Natural killer cell (primary cell): ENCODE measurements at regions of chr16 and their contacts with region 1.

Region 1: DNA sequence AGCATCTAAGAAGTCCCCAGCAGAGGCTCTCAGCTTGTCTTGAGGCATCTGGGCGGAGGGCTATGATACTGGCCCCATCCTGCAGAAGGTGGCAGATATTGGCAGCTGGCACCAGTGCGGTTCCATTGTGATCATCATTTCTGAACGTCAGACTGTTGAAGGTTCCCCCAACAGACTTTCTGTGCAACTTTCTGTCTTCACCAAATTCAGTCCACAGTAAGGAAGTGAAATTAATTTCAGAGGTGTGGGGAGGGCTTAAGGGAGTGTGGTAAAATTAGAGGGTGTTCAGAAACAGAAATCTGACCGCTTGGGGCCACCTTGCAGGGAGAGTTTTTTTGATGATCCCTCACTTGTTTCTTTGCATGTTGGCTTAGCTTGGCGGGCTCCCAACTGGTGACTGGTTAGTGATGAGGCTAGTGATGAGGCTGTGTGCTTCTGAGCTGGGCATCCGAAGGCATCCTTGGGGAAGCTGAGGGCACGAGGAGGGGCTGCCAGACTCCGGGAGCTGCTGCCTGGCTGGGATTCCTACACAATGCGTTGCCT is at the start of gene CIITA:
- DNase-seq: peak; percentile 56 to 84
- ATAC-seq: peak; percentile 80 to 89 (median 84)
- H3K4me3 ChIP-seq: peak within 1 kb of the TSS; percentile 84
- H3K4me3 Mint-ChIP-seq: peak within 1 kb of the TSS; percentile 97
- H3K27ac ChIP-seq: peak within 1 kb of the TSS; percentile 79
- H3K27ac Mint-ChIP-seq: peak within 1 kb of the TSS; percentile 83 to 89
- H3K4me1 ChIP-seq: peaks cover 71% of the 10 kb centered on the region
- H3K4me1 Mint-ChIP-seq: peaks cover 58 to 67% of the 10 kb centered on the region in 2 donors
- H3K27me3 ChIP-seq: no peaks in the 10 kb centered on the region
- H3K27me3 Mint-ChIP-seq: peaks cover 0 to 13% of the 10 kb centered on the region in 2 donors
- CTCF ChIP-seq: no peak
- total RNA-seq, gene CIITA: 11.5 to 17.7 (median 14.4) TPM

Region 2: DNA sequence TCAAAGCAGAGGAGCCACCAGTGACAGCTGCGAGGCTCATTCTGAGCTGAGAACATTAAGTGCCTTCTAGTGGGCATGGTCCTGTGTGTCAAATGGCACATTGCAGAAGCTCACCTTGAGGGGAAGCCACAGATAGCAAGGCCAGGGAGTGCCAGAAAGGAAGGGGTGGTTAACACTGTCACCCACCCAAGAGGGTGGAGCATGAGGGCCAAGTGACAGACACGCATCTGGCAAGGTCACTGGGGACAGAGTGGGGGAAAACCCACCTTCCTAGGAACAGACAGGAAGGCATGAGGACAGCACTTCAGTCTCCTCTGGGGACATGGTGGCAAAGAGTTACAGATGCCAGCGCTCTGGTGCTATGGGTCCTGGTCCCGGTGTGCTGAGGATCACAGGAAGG is 111.1 kb before region 1 on chr16:
- intact Hi-C with region 1: loop called (anchors 5 kb)
- DNase-seq: peak; percentile 42 to 74
- ATAC-seq: peak; percentile 85 to 90 (median 89)
- H3K4me3 ChIP-seq: no peak overlapping the region
- H3K4me3 Mint-ChIP-seq: peak overlapping the region; percentile 75
- H3K27ac ChIP-seq: peak overlapping the region; percentile 72
- H3K27ac Mint-ChIP-seq: peak overlapping the region; percentile 97
- H3K4me1 ChIP-seq: peaks cover 74% of the 10 kb centered on the region
- H3K4me1 Mint-ChIP-seq: peaks cover 48 to 64% of the 10 kb centered on the region in 2 donors
- H3K27me3 ChIP-seq: no peaks in the 10 kb centered on the region
- H3K27me3 Mint-ChIP-seq: no peaks in the 10 kb centered on the region
- CTCF ChIP-seq: no peak

Region 3: GRCh38 chr16:10944249-10945064 is 67.6 kb after region 1 on chr16 and contains the start of gene CLEC16A:
- intact Hi-C with region 1: no loop called
- DNase-seq: peak; percentile 96
- ATAC-seq: peak; percentile 77 to 91 (median 81)
- H3K4me3 ChIP-seq: peak within 1 kb of the TSS; percentile 90
- H3K4me3 Mint-ChIP-seq: peak within 1 kb of the TSS; percentile 88
- H3K27ac ChIP-seq: peak within 1 kb of the TSS; percentile 50
- H3K27ac Mint-ChIP-seq: peak within 1 kb of the TSS; percentile 65 to 93
- H3K4me1 ChIP-seq: peaks cover 54% of the 10 kb centered on the region
- H3K4me1 Mint-ChIP-seq: peaks cover 56 to 67% of the 10 kb centered on the region in 2 donors
- H3K27me3 ChIP-seq: no peaks in the 10 kb centered on the region
- H3K27me3 Mint-ChIP-seq: no peaks in the 10 kb centered on the region
- CTCF ChIP-seq: no peak
- total RNA-seq, gene CLEC16A: 35.9 to 50.5 (median 37.4) TPM

Region 4: GRCh38 chr16:11232852-11233726 is 356.2 kb after region 1 on chr16:
- intact Hi-C with region 1: loop called (anchors 10 kb)
- DNase-seq: peak; percentile 65 to 91
- ATAC-seq: peak; percentile 70 to 85 (median 79)
- H3K4me3 ChIP-seq: peak overlapping the region; percentile 4
- H3K4me3 Mint-ChIP-seq: peak overlapping the region; percentile 74
- H3K27ac ChIP-seq: peak overlapping the region; percentile 87
- H3K27ac Mint-ChIP-seq: peak overlapping the region; percentile 84 to 92
- H3K4me1 ChIP-seq: peaks cover 68% of the 10 kb centered on the region
- H3K4me1 Mint-ChIP-seq: peaks cover 56 to 59% of the 10 kb centered on the region in 2 donors
- H3K27me3 ChIP-seq: no peaks in the 10 kb centered on the region
- H3K27me3 Mint-ChIP-seq: no peaks in the 10 kb centered on the region
- CTCF ChIP-seq: no peak